ENCODE measurements at regions of chr4 and their contacts with region 1.

Region 1: DNA sequence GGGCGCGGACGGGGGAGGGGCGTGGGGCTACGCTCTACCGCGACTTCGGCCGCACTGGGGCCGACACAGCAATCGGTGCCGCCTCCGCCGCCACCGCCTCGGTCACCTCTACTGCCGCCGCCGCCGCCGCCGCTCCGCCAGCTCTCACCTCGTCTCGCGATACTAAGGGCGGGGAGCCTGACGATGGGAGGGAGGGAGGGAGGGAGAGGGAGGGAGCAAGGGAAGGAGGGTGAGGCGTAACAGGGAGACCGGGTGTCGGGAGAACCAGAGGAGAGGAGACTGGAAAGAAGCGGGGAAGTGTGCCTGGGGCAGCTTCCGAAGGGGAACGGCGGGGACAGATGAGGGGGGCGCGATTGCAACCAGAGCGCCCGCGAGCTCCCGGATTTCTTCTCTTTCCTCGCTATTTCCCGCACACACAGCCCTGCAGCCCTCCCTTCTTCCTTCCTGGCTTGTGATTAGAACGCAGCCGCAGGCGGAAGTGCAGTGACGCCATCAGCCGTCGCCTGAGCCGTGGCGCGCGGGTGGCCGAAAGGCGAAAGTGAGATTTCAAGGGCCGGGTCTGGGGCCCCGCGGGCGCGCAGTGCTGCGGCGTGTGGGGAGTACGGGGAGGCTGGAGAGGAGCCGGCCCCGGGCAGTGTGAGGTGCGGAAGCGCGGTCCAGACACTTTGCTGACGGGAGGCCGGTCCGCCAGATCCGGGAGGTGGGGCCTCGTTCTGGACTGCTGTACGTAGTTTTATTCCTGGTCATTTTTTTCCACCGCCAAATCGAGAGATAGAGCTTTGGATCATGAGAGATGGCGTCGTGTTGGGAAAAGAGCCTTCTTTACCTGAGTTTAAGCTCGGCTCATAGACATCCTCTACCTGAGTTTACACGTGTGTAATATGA is at the start of gene ANKRD17:
- DNase-seq: peak; percentile 90
- ATAC-seq: peak; percentile 76
- H3K4me3 Mint-ChIP-seq: peak within 1 kb of the TSS; percentile 98
- H3K27ac Mint-ChIP-seq: peak within 1 kb of the TSS; percentile 99
- H3K4me1 Mint-ChIP-seq: peaks cover 64% of the 10 kb centered on the region
- H3K27me3 Mint-ChIP-seq: no peaks in the 10 kb centered on the region
- CTCF ChIP-seq: no peak
- total RNA-seq, gene ANKRD17: 54.1 and 61.4 TPM in 2 replicates

Region 2: GRCh38 chr4:72701987-72702819 is 556.7 kb before region 1 on chr4:
- CTCF ChIA-PET with region 1: no interaction called
- POLR2A ChIA-PET with region 1: no interaction called
- intact Hi-C with region 1: loop called (anchors 2 kb)
- DNase-seq: no peak
- ATAC-seq: no peak
- H3K4me3 Mint-ChIP-seq: peak overlapping the region; percentile 75
- H3K27ac Mint-ChIP-seq: no peak overlapping the region
- H3K4me1 Mint-ChIP-seq: no peaks in the 10 kb centered on the region
- H3K27me3 Mint-ChIP-seq: peaks cover 6% of the 10 kb centered on the region
- CTCF ChIP-seq: no peak

Region 3: DNA sequence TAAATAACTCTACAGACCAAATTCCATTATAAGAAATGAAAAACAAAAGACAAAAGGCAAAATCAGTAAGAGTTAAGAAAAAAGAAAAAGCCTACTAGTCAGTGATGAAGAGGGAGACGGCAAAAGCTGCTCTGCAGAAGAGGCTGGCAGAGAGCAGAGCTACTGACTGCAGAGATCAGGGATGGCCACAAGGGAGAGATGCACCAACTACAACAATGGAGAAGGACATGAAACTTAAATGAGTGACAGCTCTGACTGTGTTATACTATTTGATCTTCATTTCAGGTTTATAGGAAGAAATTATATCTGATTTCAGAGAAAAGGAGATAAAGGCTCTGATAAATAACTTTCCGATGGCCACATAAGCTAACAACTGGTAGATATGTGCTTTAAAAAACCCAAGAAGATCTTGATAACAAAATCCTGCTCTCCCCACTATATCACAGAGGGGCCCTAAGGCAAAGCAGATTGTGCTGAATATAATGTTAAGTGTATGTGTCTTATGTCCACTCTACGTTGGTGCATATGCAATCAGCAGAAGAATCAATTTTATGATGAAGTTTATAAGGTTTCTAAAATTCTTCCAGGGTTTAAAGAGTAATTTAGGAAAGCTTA is 131.0 kb before region 1 on chr4:
- CTCF ChIA-PET with region 1: interaction called, 14 read pairs
- POLR2A ChIA-PET with region 1: interaction called, 4 read pairs
- intact Hi-C with region 1: loop called (anchors 1 kb)
- DNase-seq: no peak
- ATAC-seq: peak; percentile 54
- H3K4me3 Mint-ChIP-seq: no peak overlapping the region
- H3K27ac Mint-ChIP-seq: no peak overlapping the region
- H3K4me1 Mint-ChIP-seq: no peaks in the 10 kb centered on the region
- H3K27me3 Mint-ChIP-seq: no peaks in the 10 kb centered on the region
- CTCF ChIP-seq: no peak

Region 4: GRCh38 chr4:73187325-73187724 is 71.6 kb before region 1 on chr4:
- CTCF ChIA-PET with region 1: no interaction called
- POLR2A ChIA-PET with region 1: no interaction called
- intact Hi-C with region 1: loop called (anchors 2 kb)
- DNase-seq: no peak
- ATAC-seq: peak; percentile 60
- H3K4me3 Mint-ChIP-seq: peak overlapping the region; percentile 15
- H3K27ac Mint-ChIP-seq: peak overlapping the region; percentile 5
- H3K4me1 Mint-ChIP-seq: peaks cover 34% of the 10 kb centered on the region
- H3K27me3 Mint-ChIP-seq: no peaks in the 10 kb centered on the region
- CTCF ChIP-seq: no peak

Region 5: GRCh38 chr4:73234712-73235111 is 24.2 kb before region 1 on chr4:
- CTCF ChIA-PET with region 1: no interaction called
- POLR2A ChIA-PET with region 1: no interaction called
- intact Hi-C with region 1: no loop called
- DNase-seq: no peak
- ATAC-seq: no peak
- H3K4me3 Mint-ChIP-seq: no peak overlapping the region
- H3K27ac Mint-ChIP-seq: no peak overlapping the region
- H3K4me1 Mint-ChIP-seq: peaks cover 17% of the 10 kb centered on the region
- H3K27me3 Mint-ChIP-seq: no peaks in the 10 kb centered on the region
- CTCF ChIP-seq: no peak

Region 6: GRCh38 chr4:73245955-73246354 is 13.0 kb before region 1 on chr4:
- CTCF ChIA-PET with region 1: no interaction called
- POLR2A ChIA-PET with region 1: interaction called, 14 read pairs
- intact Hi-C with region 1: loop called (anchors 1 kb)
- DNase-seq: no peak
- ATAC-seq: no peak
- H3K4me3 Mint-ChIP-seq: no peak overlapping the region
- H3K27ac Mint-ChIP-seq: no peak overlapping the region
- H3K4me1 Mint-ChIP-seq: peaks cover 43% of the 10 kb centered on the region
- H3K27me3 Mint-ChIP-seq: no peaks in the 10 kb centered on the region
- CTCF ChIP-seq: no peak

Region 7: GRCh38 chr4:73376976-73377375 is 118.0 kb after region 1 on chr4:
- CTCF ChIA-PET with region 1: no interaction called
- POLR2A ChIA-PET with region 1: no interaction called
- intact Hi-C with region 1: no loop called
- DNase-seq: no peak
- ATAC-seq: no peak
- H3K4me3 Mint-ChIP-seq: no peak overlapping the region
- H3K27ac Mint-ChIP-seq: no peak overlapping the region
- H3K4me1 Mint-ChIP-seq: no peaks in the 10 kb centered on the region
- H3K27me3 Mint-ChIP-seq: peaks cover 3% of the 10 kb centered on the region
- CTCF ChIP-seq: no peak

Region 8: GRCh38 chr4:73593631-73594241 is 334.8 kb after region 1 on chr4:
- CTCF ChIA-PET with region 1: no interaction called
- POLR2A ChIA-PET with region 1: interaction called, 14 read pairs
- intact Hi-C with region 1: loop called (anchors 5 kb)
- DNase-seq: no peak
- ATAC-seq: no peak
- H3K4me3 Mint-ChIP-seq: no peak overlapping the region
- H3K27ac Mint-ChIP-seq: no peak overlapping the region
- H3K4me1 Mint-ChIP-seq: peaks cover 34% of the 10 kb centered on the region
- H3K27me3 Mint-ChIP-seq: no peaks in the 10 kb centered on the region
- CTCF ChIP-seq: no peak

Region 9: GRCh38 chr4:74157561-74158465 is 898.9 kb after region 1 on chr4 and contains the start of gene MTHFD2L:
- CTCF ChIA-PET with region 1: no interaction called
- POLR2A ChIA-PET with region 1: no interaction called
- intact Hi-C with region 1: loop called (anchors 2 kb)
- DNase-seq: peak; percentile 83
- ATAC-seq: peak; percentile 97
- H3K4me3 Mint-ChIP-seq: peak within 1 kb of the TSS; percentile 92
- H3K27ac Mint-ChIP-seq: peak within 1 kb of the TSS; percentile 80
- H3K4me1 Mint-ChIP-seq: peaks cover 18% of the 10 kb centered on the region
- H3K27me3 Mint-ChIP-seq: peaks cover 6% of the 10 kb centered on the region
- CTCF ChIP-seq: no peak
- total RNA-seq, gene MTHFD2L: 12.0 and 14.3 TPM in 2 replicates

Measured in activated B cell treated with CpG ODN at 0.5 μM for 24 hours (primary cell).